ENCODE measurements at regions of chr15 and their contacts with region 1.

Region 1: GRCh38 chr15:81274931-81275707 is 48.8 kb downstream of the STARD5 start:
- DNase-seq: peak; percentile 81 to 87 (median 84)
- ATAC-seq: peak; percentile 78 to 87 (median 85)
- H3K4me3 ChIP-seq: no peak overlapping the region
- H3K27ac ChIP-seq: peak overlapping the region in 2 of 3 donors; percentile 59 to 74
- H3K4me1 ChIP-seq: peaks cover 0 to 67% (median 25%) of the 10 kb centered on the region in 4 donors
- H3K27me3 ChIP-seq: no peaks in the 10 kb centered on the region
- CTCF ChIP-seq: peak; percentile 78 to 92 (median 82)
- POLR2A ChIP-seq: no peak

Region 2: DNA sequence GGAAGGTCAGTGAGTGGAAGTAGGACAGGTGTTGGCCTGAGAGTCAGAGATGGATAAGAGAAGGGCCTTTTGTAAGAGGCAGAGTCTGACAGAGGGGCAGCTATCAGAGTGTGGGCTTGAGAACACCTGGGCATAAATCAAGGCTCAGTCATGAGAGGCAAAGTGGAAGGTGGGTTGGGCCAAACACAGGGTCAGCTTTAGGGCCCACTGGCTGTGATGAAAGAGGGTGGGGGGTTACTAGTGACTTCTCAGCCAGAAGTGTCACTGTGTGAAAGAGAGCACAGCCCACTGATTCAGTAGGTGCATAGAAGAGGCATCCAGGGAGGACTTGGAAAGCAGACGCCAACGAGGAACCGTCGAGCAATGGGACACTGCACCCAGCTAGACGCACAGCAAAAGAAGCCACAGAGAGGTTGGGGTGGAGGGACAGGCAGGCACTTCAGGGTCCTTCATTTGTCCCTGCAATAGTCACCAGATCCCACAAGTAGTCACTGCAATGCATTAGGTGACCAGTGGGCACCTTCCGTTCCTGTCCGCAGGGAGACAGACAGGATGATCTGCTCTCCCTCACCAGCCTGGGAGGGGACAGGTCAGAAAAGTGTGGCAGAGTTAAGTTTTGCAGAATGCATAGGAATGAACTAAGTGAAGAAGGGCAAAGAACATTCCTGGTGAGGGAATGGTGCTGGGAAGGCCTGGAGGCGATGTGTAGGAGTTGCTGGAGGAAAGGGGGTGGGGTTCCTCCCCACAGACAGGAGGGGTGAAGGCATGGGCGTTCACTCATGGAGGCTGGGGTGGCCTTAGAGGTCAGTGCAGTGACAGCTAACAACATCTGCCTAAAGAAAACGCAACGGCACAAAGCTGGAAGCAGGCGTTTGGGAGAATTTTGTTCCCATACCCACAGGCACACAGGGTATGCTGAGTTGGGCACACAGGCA is 321.9 kb before region 1 on chr15:
- intact Hi-C with region 1: no loop called
- DNase-seq: no peak
- ATAC-seq: no peak
- H3K4me3 ChIP-seq: no peak overlapping the region
- H3K27ac ChIP-seq: no peak overlapping the region
- H3K4me1 ChIP-seq: no peaks in the 10 kb centered on the region
- H3K27me3 ChIP-seq: no peaks in the 10 kb centered on the region
- CTCF ChIP-seq: no peak
- POLR2A ChIP-seq: no peak

Region 3: DNA sequence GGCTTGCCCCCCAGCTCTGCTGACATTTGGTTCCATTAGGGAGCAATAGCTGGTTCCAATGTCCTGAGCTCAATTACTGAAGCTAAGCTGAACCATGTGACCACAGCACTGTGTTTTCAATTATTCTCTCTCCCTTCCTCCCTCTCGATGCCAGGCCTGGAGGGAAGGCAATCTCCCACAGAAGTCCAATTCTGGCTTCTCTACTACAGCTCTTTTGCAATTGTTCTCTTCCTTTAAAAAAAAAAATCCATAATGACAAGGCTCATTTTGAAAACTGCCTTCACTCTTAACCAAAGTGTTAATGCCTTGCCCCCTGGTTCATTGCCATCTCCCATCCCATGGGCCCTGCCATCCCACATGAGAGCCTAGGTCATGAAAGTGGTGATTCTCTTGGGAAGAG is 53.7 kb before region 1 on chr15:
- intact Hi-C with region 1: no loop called
- DNase-seq: no peak
- ATAC-seq: no peak
- H3K4me3 ChIP-seq: no peak overlapping the region
- H3K27ac ChIP-seq: no peak overlapping the region
- H3K4me1 ChIP-seq: no peaks in the 10 kb centered on the region
- H3K27me3 ChIP-seq: no peaks in the 10 kb centered on the region
- CTCF ChIP-seq: no peak
- POLR2A ChIP-seq: no peak

Region 4: DNA sequence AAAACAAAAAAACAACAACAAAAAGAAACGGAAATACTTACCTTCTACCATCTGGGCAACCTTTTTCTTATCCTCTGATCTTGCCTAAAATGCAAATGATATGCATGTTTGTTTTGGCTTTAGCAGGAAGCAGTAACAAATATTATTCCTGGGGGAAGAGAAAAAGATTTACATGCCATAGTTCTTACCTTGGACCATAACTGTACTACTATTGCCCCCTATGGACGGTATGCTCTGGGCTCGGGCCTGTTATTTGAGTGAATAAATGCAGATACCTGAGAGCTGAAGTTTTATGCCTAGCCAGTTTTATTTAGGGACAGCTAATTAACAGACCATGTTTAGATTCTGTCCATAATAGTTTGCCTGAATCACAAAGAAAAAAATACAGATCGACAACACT is 61.4 kb after region 1 on chr15:
- intact Hi-C with region 1: loop called in 1 of 2 experiments (anchors 10 kb)
- DNase-seq: no peak
- ATAC-seq: peak; percentile 60 to 69 (median 66)
- H3K4me3 ChIP-seq: no peak overlapping the region
- H3K27ac ChIP-seq: no peak overlapping the region
- H3K4me1 ChIP-seq: peaks cover 0 to 22% (median 9%) of the 10 kb centered on the region in 4 donors
- H3K27me3 ChIP-seq: no peaks in the 10 kb centered on the region
- CTCF ChIP-seq: peak; percentile 10 to 39 (median 30)
- POLR2A ChIP-seq: no peak

Region 5: DNA sequence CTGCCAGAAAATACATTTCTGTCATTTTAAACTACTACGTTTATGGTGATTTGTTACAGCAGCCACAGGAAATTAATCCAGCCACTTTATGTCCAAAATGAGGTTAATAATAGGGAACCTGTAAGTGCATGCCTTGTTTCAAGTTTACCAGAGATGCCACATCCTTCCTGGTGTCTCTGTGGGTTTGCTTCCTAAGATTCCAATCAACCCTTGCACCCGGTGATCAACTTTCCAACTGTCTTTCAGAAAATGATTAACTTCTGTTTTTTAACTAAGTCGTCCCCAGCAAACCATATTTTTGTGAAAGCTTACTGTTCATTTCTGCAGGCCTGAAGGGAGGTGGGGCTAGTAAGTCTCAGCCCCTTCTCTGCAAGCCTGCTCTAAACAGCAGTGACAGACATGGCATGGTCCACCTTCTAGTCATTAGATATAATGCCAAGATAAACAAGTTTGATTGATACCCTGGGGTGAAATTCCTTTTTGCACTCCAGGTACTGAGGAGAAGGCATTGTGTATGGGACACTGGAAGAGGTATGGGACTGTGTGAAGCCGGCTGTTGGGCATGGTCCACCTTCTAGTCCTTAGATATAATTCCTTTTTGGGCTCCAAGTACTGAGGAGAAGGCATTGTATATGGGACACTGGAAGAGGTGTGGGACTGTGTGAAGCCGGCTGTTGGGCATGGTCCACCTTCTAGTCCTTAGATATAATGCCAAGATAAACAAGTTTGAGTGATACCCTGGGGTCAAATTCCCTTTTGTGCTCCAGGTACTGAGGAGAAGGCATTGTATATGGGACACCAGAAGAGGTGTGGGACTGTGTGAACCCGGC is 110.0 kb after region 1 on chr15:
- intact Hi-C with region 1: loop called in 1 of 2 experiments (anchors 10 kb)
- DNase-seq: peak; percentile 24 to 61 (median 55)
- ATAC-seq: peak; percentile 91 to 93 (median 92)
- H3K4me3 ChIP-seq: no peak overlapping the region
- H3K27ac ChIP-seq: peak overlapping the region in 1 of 3 donors; percentile 31
- H3K4me1 ChIP-seq: peaks cover 0 to 24% (median 6%) of the 10 kb centered on the region in 4 donors
- H3K27me3 ChIP-seq: no peaks in the 10 kb centered on the region
- CTCF ChIP-seq: no peak
- POLR2A ChIP-seq: no peak

Region 6: DNA sequence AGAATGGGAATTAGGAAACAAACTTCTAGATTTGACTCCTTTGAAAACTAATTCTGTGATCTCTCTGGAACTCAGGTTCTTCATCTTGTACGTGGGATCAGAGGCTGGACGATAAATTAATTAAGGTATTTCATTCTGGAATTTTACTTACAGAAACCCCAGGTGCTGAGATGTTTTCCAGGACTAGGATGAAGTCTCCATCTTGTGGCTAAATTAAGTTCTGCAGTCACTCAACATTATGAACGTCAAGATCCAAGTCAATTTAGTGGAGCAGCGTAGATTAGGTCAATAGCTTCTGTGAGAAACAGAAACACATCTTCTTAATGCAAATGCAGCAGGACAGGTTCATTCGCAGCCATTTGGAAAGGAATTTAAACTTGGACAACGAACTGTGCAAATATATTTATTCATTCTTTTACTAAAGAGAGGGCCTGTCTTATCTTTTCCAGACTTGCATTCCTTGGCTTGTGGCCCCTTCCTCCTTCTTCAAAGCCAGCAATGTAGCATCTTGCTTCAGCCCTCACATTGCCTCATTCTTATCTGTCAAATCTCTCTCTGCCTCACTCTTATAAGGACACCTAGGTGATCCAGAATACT is 125.6 kb after region 1 on chr15:
- intact Hi-C with region 1: loop called in 1 of 2 experiments (anchors 10 kb)
- DNase-seq: no peak
- ATAC-seq: peak; percentile 68 to 75 (median 72)
- H3K4me3 ChIP-seq: no peak overlapping the region
- H3K27ac ChIP-seq: no peak overlapping the region
- H3K4me1 ChIP-seq: peaks cover 0 to 18% (median 7%) of the 10 kb centered on the region in 4 donors
- H3K27me3 ChIP-seq: no peaks in the 10 kb centered on the region
- CTCF ChIP-seq: peak; percentile 79 to 89 (median 81)
- POLR2A ChIP-seq: no peak